ENCODE measurements at regions of chr4 and their contacts with region 1.

Region 1: GRCh38 chr4:147355847-147356246 is 125.0 kb upstream of the EDNRA start:
- DNase-seq: no peak
- H3K4me3 Mint-ChIP-seq: no peak overlapping the region
- H3K27ac Mint-ChIP-seq: no peak overlapping the region
- H3K4me1 Mint-ChIP-seq: no peaks in the 10 kb centered on the region
- H3K27me3 Mint-ChIP-seq: no peaks in the 10 kb centered on the region

Region 2: GRCh38 chr4:148852092-148852699 is 1496.3 kb after region 1 on chr4:
- CTCF ChIA-PET with region 1: no interaction called
- intact Hi-C with region 1: loop called (anchors 5 kb)
- DNase-seq: no peak
- H3K4me3 Mint-ChIP-seq: no peak overlapping the region
- H3K27ac Mint-ChIP-seq: no peak overlapping the region
- H3K4me1 Mint-ChIP-seq: no peaks in the 10 kb centered on the region
- H3K27me3 Mint-ChIP-seq: no peaks in the 10 kb centered on the region

Region 3: GRCh38 chr4:148986951-148987350 is 1631.1 kb after region 1 on chr4:
- CTCF ChIA-PET with region 1: no interaction called
- intact Hi-C with region 1: no loop called
- DNase-seq: no peak
- H3K4me3 Mint-ChIP-seq: no peak overlapping the region
- H3K27ac Mint-ChIP-seq: no peak overlapping the region
- H3K4me1 Mint-ChIP-seq: no peaks in the 10 kb centered on the region
- H3K27me3 Mint-ChIP-seq: peaks cover 3% of the 10 kb centered on the region

Measured in activated naive CD4-positive, alpha-beta T cell treated with anti-CD3 and anti-CD28 coated beads for 36 hours (primary cell).